ENCODE measurements at regions of chr2 and their contacts with region 1.

Region 1: GRCh38 chr2:45643543-45644542 is 7.6 kb upstream of the PRKCE start:
- DNase-seq: peak; percentile 46 to 86 (median 73)
- ATAC-seq: peak; percentile 99
- H3K4me3 ChIP-seq: peak overlapping the region; percentile 44
- H3K4me3 Mint-ChIP-seq: peak overlapping the region; percentile 16 to 67 (median 50)
- H3K27ac ChIP-seq: no peak overlapping the region
- H3K27ac Mint-ChIP-seq: peak overlapping the region in 2 of 9 donors; percentile 46 to 57
- H3K4me1 ChIP-seq: peaks cover 0 to 9% of the 10 kb centered on the region in 2 donors
- H3K4me1 Mint-ChIP-seq: peaks cover 0 to 18% (median 5%) of the 10 kb centered on the region in 7 donors
- H3K27me3 ChIP-seq: no peaks in the 10 kb centered on the region
- H3K27me3 Mint-ChIP-seq: peaks cover 11 to 37% (median 20%) of the 10 kb centered on the region in 5 donors

Region 2: DNA sequence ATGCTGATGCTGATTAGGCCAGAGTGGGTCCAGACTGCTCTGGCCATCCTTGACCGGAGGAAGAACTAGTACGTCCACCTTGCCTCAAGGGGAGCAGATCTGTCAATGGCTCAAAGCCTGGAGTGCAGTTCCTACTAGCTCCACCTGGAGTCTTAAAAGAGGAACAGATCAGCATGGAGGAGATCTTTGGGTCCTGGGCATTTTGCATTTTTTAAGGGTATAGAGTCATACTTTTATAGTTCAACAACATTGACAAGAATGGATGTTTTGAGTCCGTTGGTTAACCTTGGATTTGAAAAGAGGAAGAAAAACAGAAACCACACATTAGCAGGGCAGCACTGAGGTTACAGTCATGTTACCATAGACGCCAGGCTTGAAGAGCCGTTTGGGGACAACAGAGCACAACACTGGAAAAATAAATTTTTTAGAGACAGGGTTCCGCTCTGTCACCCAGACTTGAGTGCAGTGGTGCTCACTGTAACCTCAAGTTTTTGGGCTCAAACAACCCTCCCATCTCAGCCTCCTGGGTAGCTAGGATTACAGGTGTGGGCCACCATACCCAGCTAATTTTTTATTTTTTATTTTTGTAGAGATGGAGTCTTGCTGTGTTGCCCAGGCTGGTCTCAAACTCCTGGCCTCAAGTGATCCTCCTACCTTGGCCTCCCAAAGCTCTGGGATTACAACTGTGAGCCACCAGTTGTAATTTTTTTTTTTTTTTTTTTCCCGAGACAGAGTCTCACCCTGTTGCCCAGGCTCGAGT is 86.1 kb after region 1 on chr2:
- CTCF ChIA-PET with region 1: no interaction called
- POLR2A ChIA-PET with region 1: no interaction called
- intact Hi-C with region 1: loop called in 1 of 2 experiments (anchors 1 kb)
- DNase-seq: no peak
- ATAC-seq: peak; percentile 77
- H3K4me3 ChIP-seq: no peak overlapping the region
- H3K4me3 Mint-ChIP-seq: no peak overlapping the region
- H3K27ac ChIP-seq: no peak overlapping the region
- H3K27ac Mint-ChIP-seq: peak overlapping the region in 1 of 9 donors; percentile 54
- H3K4me1 ChIP-seq: no peaks in the 10 kb centered on the region
- H3K4me1 Mint-ChIP-seq: peaks cover 0 to 10% (median 0%) of the 10 kb centered on the region in 7 donors
- H3K27me3 ChIP-seq: no peaks in the 10 kb centered on the region
- H3K27me3 Mint-ChIP-seq: no peaks in the 10 kb centered on the region

Region 3: DNA sequence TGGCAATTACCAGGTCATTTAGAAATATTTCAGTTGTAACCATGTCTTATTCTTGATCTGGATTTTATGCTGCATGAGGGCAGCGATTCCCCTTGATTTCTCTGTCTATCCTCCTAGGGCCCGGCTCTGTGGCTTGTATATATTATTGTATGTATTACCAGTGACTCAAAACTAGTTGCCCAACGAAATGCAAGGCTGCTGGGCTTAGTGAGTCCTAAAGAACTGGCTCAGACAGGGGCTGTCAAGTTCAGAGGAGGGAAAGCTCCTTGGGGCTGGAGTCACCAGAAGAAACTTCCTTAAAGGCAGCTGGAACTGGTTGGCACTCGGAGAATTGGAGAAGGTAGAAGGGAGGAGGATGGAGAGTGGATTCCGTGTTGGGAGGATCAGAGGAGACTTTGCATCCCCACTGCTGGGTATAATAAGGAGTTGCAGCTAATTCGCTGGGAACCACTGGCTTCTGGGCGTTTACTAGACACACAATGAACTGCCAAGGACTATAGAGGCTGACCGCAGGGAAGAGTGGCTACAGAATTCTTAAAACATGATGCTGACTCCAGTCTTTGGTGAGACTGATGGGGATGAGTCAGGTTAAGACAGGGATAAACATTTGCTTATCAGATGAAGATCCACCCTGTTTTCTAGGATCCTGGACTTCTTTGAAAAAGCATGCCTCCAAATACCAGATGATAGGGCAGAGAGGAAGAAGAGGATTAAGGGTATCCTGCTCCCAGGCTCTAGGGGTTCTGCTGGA is 111.9 kb after region 1 on chr2:
- CTCF ChIA-PET with region 1: no interaction called
- POLR2A ChIA-PET with region 1: no interaction called
- intact Hi-C with region 1: no loop called
- DNase-seq: no peak
- ATAC-seq: no peak
- H3K4me3 ChIP-seq: no peak overlapping the region
- H3K4me3 Mint-ChIP-seq: no peak overlapping the region
- H3K27ac ChIP-seq: no peak overlapping the region
- H3K27ac Mint-ChIP-seq: no peak overlapping the region
- H3K4me1 ChIP-seq: no peaks in the 10 kb centered on the region
- H3K4me1 Mint-ChIP-seq: peaks cover 0 to 14% (median 3%) of the 10 kb centered on the region in 7 donors
- H3K27me3 ChIP-seq: no peaks in the 10 kb centered on the region
- H3K27me3 Mint-ChIP-seq: no peaks in the 10 kb centered on the region

Region 4: DNA sequence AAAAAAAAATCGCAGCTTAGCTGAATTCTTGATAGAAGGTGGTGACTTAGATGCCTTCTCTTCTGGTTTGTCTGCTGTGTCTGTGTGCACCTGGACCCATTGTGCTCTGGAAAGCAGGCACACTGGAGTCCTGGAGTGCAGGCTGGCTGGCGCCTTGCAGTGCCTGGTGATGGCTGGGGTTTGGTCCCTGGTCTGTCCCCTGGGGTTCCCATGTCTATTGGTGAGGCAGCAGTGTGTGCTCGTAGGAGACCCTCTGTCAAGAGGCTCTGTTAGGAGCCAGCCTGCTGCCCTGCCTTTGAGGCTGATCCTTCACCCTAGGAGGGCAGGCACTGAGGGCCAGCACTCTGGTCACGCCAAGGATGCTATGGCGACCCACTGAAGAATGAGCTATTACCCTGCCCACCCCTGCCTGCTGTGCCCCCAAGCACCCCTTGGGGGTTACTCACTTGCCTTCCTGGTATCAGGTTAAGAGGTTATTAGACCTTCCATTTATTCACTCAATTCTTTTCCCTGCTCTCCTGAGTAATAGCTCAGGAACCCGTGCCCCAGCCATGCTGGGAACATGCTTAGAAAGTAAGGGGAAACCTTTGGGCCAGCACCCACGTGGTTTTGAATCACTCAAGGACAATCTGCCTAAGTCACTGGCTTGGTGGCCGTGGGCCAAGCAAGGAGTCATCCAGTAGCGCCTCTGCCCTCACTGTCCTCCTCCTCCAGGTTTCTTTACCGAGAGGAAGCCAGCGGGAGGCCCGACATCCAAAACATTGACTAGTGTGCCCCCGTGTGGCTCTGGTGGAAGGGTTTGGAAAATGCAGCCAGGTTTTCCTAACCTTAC is 292.2 kb after region 1 on chr2:
- CTCF ChIA-PET with region 1: interaction called, 4 read pairs
- POLR2A ChIA-PET with region 1: no interaction called
- intact Hi-C with region 1: loop called (anchors 1 kb)
- DNase-seq: peak; percentile 33 to 65 (median 49)
- ATAC-seq: peak; percentile 89
- H3K4me3 ChIP-seq: no peak overlapping the region
- H3K4me3 Mint-ChIP-seq: peak overlapping the region in 1 of 10 donors; percentile 23
- H3K27ac ChIP-seq: no peak overlapping the region
- H3K27ac Mint-ChIP-seq: peak overlapping the region in 2 of 9 donors; percentile 7 to 66
- H3K4me1 ChIP-seq: no peaks in the 10 kb centered on the region
- H3K4me1 Mint-ChIP-seq: peaks cover 0 to 8% (median 0%) of the 10 kb centered on the region in 7 donors
- H3K27me3 ChIP-seq: no peaks in the 10 kb centered on the region
- H3K27me3 Mint-ChIP-seq: no peaks in the 10 kb centered on the region

Measured in naive thymus-derived CD4-positive, alpha-beta T cell (primary cell).